Heart right ventricle (tissue), 16 donors: ENCODE measurements at regions of chr6 and their contacts with region 1.

Region 1: DNA sequence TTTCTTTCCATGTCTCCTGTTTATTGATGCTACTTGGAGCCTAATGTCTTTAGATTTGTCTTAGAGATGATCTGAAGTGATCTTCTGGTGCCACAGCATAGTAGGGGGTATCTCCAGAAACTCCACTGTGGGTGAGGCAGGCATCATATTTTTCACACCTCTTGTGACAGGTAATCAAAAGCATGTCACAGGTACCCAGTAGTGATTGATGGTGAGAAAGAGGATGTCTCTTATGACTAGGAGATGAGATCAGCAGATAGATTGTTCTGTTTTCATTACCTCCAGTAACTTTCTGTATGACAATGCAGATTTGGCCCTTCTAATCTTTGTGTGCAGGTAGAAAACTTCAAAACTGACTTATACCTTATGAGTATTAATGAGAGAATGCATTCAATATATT is 13.5 kb downstream of the NCOA7 start:
- DNase-seq: no peak
- ATAC-seq: no peak
- H3K4me3 ChIP-seq: no peak overlapping the region
- H3K27ac ChIP-seq: no peak overlapping the region
- H3K4me1 ChIP-seq: peaks cover 0 to 37% (median 9%) of the 10 kb centered on the region in 9 donors
- H3K27me3 ChIP-seq: no peaks in the 10 kb centered on the region
- CTCF ChIP-seq: no peak

Region 2: DNA sequence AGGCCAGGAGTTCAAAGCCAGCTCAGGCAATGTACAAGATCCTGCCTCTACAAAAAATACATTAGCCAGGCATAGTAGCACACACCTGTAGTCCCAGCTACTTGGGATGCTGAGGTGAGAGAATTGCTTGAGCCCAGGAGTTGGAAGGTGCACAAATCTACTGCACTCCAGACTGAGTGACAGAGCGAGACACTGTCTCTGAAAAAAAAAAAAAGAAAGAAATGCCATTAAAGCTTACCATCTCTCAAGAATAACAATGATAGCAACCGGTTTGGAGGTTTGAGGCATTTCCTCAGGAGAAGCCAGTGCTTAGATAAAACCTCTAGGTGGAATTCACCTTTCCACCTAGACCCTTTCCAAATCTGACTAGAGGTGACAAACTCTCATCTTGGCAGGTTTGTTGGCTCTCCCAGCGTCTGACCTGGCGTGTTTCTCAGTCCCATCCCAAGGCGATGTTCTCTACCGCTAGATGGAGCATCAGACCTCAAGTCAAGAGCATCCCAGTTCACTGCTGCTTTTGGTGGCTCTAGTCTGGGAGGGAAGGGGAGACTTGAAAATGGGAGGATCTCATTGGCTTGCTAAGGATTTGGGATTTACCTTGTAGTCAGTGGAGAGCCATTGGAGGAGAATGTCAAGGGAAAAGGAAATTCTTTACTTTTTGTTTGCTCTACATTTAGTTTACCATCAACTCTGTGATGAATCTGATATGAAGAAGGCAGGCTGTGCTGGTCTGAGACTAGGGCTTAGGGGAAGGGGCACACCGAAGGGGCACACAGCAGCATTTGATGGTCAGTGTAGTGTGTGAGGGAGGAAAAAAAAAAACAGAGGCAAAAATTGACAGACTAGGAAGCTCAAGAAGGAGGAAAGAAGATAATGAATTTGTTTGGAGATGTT is 54.4 kb after region 1 on chr6:
- intact Hi-C with region 1: loop called in 1 of 10 experiments (anchors 5 kb)
- DNase-seq: peak in 1 of 2 donors; percentile 53
- ATAC-seq: peak in 7 of 8 donors; percentile 75 to 90 (median 85)
- H3K4me3 ChIP-seq: no peak overlapping the region
- H3K27ac ChIP-seq: no peak overlapping the region
- H3K4me1 ChIP-seq: peaks cover 0 to 6% (median 2%) of the 10 kb centered on the region in 9 donors
- H3K27me3 ChIP-seq: no peaks in the 10 kb centered on the region
- CTCF ChIP-seq: peak; percentile 26 to 79 (median 68)